BJ (cell line): ENCODE measurements at regions of chr20 and their contacts with region 1.

Region 1: DNA sequence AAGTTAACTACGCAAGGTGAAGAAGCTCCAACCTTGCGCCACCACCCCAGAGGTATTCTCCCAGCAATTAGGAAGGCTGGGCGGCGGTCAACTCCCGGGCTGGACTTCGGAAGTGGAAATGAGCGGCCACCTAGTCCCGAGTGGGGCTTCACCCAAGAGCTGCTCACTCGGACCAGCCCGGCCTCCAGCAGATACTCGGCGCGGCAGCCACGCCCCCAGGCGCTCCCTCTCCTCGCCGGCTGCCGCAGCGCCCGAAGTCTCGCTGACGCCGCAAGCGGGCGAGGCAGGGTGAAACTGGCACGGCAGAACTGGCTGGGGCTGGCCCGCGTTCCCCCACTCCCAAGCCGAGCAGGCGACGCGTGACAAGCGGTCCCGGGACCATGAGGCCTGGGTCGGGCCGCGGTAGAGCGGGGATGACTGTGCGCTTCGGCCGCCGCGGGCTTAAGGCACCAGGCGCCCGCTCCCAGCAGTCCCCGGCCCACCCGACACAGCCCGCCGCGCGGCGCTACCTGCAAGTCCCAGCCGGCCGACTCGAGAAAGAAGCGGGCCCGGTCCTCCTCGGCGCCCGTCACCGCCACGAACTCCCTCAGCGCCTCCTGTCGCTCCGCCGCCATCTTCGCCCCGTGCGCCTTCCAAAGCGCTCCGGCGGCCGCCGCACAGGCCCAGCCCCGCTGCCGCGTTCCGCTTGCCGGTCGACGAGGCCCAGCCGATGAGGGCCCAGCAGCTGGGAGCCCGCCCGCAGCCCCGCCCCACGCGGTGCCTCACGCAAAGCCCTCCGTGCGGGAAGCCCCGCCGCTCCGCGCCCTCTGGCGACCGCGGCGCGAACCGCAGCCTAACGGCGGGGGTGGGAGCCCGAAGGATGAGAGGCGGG is at the start of gene NSFL1C:
- DNase-seq: peak; percentile 37
- H3K4me3 ChIP-seq: peak within 1 kb of the TSS; percentile 96
- H3K27me3 ChIP-seq: no peaks in the 10 kb centered on the region
- CTCF ChIP-seq: peak; percentile 85
- polyA plus RNA-seq, gene NSFL1C: 27.7 and 32.4 TPM in 2 replicates

Region 2: GRCh38 chr20:1118336-1119127 is 347.9 kb before region 1 on chr20 and contains the start of gene PSMF1:
- CTCF ChIA-PET with region 1: no interaction called
- POLR2A ChIA-PET with region 1: no interaction called
- DNase-seq: peak; percentile 42
- H3K4me3 ChIP-seq: peak within 1 kb of the TSS; percentile 67
- H3K27me3 ChIP-seq: no peaks in the 10 kb centered on the region
- CTCF ChIP-seq: no peak
- polyA plus RNA-seq, gene PSMF1: 87.5 and 154 TPM in 2 replicates

Region 3: DNA sequence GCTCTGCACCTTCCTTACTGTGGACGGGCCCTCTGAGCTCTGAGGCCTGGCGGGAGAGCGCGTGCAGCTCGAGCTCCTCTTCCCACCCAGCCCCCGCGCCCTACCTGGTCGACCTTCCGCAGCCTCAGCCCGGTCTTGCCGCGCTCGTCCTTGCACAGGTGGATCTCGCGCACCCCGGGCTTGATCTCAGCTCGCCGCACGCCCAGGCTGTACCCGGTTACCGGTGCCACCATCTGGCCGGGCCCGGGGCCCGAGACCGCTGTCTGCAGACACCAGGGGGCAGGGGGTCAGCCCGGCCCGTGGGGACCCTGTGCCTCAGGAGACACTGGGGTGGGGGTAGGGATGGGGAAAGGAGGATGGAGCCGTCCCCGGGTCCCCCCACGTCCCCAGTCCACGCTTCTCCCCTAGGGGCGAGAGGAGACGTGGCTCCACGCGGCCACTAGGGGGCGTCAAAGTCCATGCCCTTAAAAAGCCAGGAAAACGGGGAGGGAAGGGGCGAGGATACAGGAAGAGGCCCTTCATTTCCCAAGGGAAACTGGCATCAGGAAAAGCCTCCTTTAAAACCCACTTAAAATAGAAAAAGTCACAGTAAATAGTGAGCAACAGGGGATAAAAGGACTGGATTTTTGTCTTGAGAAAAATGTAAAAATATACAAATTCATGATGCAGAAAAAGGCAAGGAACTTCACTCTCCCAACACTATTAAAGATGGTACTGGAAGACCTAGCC is 153.0 kb before region 1 on chr20:
- CTCF ChIA-PET with region 1: interaction called, 11 read pairs
- POLR2A ChIA-PET with region 1: no interaction called
- DNase-seq: no peak
- H3K4me3 ChIP-seq: peak overlapping the region; percentile 21
- H3K27me3 ChIP-seq: no peaks in the 10 kb centered on the region
- CTCF ChIP-seq: peak; percentile 97

Region 4: GRCh38 chr20:1450926-1451491 is 15.4 kb before region 1 on chr20:
- CTCF ChIA-PET with region 1: interaction called, 38 read pairs
- POLR2A ChIA-PET with region 1: no interaction called
- DNase-seq: no peak
- H3K4me3 ChIP-seq: no peak overlapping the region
- H3K27me3 ChIP-seq: no peaks in the 10 kb centered on the region
- CTCF ChIP-seq: no peak